Activated B cell treated with CpG ODN at 0.5 μM for 24 hours (primary cell): ENCODE measurements at regions of chr6 and their contacts with region 1.

Region 1: GRCh38 chr6:159979136-159979874 is 10.4 kb downstream of the IGF2R start:
- DNase-seq: peak; percentile 61
- ATAC-seq: peak; percentile 86
- H3K4me3 Mint-ChIP-seq: peak overlapping the region; percentile 76
- H3K27ac Mint-ChIP-seq: peak overlapping the region; percentile 90
- H3K4me1 Mint-ChIP-seq: peaks cover 88% of the 10 kb centered on the region
- H3K27me3 Mint-ChIP-seq: no peaks in the 10 kb centered on the region
- CTCF ChIP-seq: no peak

Region 2: GRCh38 chr6:159726918-159727716 is 252.2 kb before region 1 on chr6 and contains the start of gene WTAP:
- CTCF ChIA-PET with region 1: no interaction called
- POLR2A ChIA-PET with region 1: interaction called, 12 read pairs
- intact Hi-C with region 1: loop called (anchors 2 kb)
- DNase-seq: peak; percentile 93
- ATAC-seq: peak; percentile 83
- H3K4me3 Mint-ChIP-seq: peak within 1 kb of the TSS; percentile 93
- H3K27ac Mint-ChIP-seq: peak within 1 kb of the TSS; percentile 99
- H3K4me1 Mint-ChIP-seq: peaks cover 50% of the 10 kb centered on the region
- H3K27me3 Mint-ChIP-seq: no peaks in the 10 kb centered on the region
- CTCF ChIP-seq: no peak
- total RNA-seq, gene WTAP: 124 and 141 TPM in 2 replicates

Region 3: DNA sequence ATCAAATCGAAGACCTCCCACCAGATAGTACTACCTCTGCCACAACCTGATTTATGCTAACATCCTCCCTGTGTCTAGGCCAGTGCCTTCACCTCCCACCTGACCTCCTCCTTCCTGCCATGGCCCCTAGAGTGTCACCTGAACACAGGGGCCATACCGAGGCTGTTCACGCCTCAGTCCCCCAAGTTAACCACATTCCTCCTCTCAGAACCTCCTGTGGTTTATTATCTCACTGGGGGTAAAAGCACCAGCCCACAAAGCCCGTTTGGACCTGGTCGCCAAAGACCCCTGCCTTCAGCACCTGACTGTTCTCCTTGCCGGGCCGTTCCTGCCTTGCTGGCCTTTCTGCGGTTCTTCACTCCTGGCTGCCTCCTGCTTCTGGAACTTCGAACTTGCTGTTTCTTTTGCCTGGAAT is 74.8 kb before region 1 on chr6:
- CTCF ChIA-PET with region 1: no interaction called
- POLR2A ChIA-PET with region 1: no interaction called
- intact Hi-C with region 1: no loop called
- DNase-seq: no peak
- ATAC-seq: no peak
- H3K4me3 Mint-ChIP-seq: no peak overlapping the region
- H3K27ac Mint-ChIP-seq: no peak overlapping the region
- H3K4me1 Mint-ChIP-seq: no peaks in the 10 kb centered on the region
- H3K27me3 Mint-ChIP-seq: peaks cover 8% of the 10 kb centered on the region
- CTCF ChIP-seq: no peak

Region 4: DNA sequence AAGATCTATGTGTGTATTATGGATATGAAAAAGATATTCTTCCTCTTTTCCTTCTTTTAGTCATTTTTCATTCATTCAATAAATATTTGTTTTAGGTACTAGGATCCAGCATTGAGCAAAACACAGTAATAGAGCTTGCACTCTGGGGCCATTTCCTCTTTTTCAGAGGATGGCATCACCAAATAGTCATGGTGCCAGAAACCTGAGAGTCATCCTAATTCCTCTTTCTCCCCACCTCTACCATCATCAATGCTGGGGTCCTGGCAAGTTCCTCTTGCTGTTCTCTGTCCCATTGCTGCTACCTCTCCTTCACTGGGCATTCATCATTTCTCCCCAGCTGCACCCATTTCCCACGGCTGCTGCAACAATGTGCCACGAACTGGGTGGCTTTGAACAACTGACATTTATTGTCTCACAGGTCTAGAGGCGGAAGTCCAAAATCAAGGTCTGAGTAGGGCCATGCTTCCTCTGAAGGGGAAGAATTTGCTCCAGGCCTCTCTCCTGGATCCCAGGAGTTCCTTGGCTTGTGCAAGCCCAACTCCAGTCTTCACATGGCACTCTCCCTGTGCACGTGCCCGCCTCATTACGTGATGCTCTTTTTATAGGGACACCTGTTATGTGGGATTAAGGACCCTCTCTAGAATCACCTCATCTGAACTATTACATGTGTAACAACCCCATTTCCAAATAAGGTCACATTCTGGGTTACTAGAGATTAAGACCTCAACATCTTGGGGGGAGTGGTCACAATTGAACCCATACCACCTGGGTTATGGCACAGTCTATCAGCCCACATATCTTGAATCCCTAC is 19.9 kb before region 1 on chr6:
- CTCF ChIA-PET with region 1: interaction called, 3 read pairs
- POLR2A ChIA-PET with region 1: interaction called, 11 read pairs
- intact Hi-C with region 1: no loop called
- DNase-seq: no peak
- ATAC-seq: peak; percentile 97
- H3K4me3 Mint-ChIP-seq: no peak overlapping the region
- H3K27ac Mint-ChIP-seq: peak overlapping the region; percentile 57
- H3K4me1 Mint-ChIP-seq: peaks cover 14% of the 10 kb centered on the region
- H3K27me3 Mint-ChIP-seq: no peaks in the 10 kb centered on the region
- CTCF ChIP-seq: no peak

Region 5: DNA sequence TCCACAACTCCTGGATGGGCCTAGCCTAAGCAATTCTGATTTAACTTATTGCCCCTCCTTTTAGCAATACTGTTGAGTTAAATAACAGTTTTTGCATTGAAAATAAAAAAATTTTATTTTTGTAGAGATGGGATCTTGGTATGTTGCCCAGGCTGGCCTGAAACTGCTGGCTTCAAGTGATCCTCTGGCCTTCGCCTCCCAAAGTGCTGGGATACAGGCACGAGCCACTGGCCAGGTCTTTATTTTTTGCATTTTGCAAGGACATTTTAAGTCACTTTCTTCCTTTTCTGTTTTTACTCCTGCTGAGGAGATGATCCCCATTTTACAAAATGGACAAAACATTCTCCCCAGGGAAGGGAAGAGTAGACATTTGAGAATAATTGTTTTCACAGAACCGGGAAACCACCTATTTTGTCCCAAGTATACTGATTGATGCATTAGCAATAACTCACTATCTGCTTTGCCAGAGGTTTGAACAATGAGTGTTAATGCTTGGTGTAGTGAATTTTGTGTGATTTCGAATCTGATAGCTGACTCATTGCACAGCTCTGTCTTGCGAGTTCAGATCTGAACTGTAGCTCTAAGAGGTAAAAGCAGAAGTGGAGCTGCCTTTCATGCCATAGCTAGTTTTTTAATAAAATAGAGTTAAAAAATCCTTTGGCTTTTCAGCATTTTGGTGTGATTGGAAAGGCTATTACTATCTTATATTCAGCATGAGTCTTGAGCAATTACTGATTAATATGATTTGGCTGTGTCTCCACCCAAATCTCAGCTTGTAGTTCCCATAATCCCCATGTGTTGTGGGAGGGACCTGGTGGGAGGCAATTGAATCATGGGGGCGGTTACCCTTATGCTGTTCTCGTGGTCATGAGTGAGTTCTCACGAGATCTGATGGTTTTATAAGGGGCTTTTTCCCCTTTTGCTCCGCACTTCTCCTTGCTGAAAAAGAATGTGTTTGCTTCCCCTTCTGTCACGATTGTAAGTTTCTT is 10.5 kb after region 1 on chr6:
- CTCF ChIA-PET with region 1: interaction called, 5 read pairs
- POLR2A ChIA-PET with region 1: interaction called, 14 read pairs
- intact Hi-C with region 1: loop called (anchors 1 kb)
- DNase-seq: no peak
- ATAC-seq: peak; percentile 85
- H3K4me3 Mint-ChIP-seq: peak overlapping the region; percentile 33
- H3K27ac Mint-ChIP-seq: peak overlapping the region; percentile 72
- H3K4me1 Mint-ChIP-seq: peaks cover 51% of the 10 kb centered on the region
- H3K27me3 Mint-ChIP-seq: no peaks in the 10 kb centered on the region
- CTCF ChIP-seq: no peak

Region 6: GRCh38 chr6:160069050-160069454 is 89.7 kb after region 1 on chr6:
- CTCF ChIA-PET with region 1: no interaction called
- POLR2A ChIA-PET with region 1: interaction called, 8 read pairs
- intact Hi-C with region 1: loop called (anchors 1 kb)
- DNase-seq: peak; percentile 38
- ATAC-seq: peak; percentile 89
- H3K4me3 Mint-ChIP-seq: peak overlapping the region; percentile 42
- H3K27ac Mint-ChIP-seq: peak overlapping the region; percentile 5
- H3K4me1 Mint-ChIP-seq: peaks cover 40% of the 10 kb centered on the region
- H3K27me3 Mint-ChIP-seq: no peaks in the 10 kb centered on the region
- CTCF ChIP-seq: no peak